Right ventricle myocardium inferior (tissue), 1 donor: ENCODE measurements at regions of chr7 and their contacts with region 1.

Region 1: GRCh38 chr7:131556052-131556908 is at the start of gene PODXL:
- DNase-seq: peak; percentile 91
- ATAC-seq: peak; percentile 89
- total RNA-seq, gene PODXL: 59.0 TPM

Region 2: DNA sequence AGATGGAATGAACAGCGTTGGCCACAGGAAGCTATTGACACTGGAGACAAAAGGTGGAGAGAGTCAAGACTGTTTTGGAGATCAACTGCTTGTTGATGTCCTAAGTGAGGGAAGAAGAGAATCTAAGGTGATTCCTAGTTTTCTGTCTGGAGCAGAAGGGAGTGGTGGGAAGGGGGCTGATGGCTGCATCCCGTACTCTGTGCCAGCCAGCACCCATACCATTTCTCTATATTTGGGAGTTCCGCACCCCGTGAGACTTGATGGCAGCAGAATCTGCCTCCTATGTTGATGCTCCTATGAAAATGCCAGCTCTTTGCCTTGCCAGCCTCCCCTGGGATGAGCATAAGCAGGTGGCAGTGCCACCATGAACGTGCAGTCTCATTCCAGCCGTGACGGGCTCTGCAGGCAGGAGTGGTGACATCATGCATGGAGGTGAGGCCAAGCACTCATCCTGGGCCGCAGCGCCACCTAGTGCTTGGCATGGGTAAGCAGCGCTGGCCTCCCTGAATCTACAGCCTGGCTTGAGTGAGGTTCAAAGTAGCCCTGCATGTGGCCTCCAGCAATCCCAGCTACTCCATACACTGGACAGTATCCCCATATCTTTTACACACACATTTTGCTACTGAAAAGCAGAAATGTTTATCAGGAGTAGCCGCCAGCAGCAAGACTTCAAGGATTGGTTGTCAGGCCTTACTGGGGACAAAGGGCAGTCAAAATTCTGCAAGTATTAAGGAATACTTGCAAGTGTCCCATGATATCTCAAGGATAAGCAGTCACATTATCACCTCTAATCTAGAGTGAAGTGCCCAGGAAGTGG is 42.8 kb before region 1 on chr7:
- intact Hi-C with region 1: loop called (anchors 2 kb)
- DNase-seq: peak; percentile 94
- ATAC-seq: peak; percentile 95

Region 3: DNA sequence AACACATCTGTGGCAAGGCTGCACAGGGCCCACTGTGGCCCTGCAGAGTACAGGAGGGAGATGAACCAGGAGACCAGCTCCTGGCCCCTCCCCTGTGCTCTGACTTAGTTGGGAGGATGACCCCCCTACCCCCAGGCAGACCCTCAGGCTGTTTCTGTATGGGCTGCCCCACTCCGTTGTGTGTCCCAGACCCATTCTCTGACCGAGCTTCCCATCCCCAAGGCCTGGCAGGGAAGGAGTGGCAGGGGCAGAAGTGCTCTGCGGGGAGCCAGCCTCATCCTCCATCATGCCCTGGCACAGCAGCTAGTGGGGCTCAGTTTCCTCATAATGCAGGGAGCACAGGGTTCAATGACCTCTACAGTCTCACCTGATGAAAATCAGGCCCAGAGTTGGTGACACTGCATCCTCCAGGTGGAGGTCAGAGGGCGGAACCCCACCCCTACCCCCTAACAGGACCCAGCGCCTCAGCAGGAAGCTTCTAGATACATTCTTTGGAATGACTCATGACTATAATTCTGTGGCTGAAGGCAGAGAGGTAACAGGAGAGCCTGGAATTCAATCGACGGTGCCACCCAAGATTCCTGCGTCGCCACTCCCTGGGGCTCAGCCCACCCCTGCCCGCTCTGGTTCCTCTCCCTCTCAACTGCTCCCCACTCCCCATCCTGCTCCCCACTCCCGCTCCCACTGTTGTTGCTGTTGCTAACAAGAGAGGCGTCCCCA is 18.0 kb before region 1 on chr7:
- intact Hi-C with region 1: no loop called
- DNase-seq: no peak
- ATAC-seq: peak; percentile 8

Region 4: DNA sequence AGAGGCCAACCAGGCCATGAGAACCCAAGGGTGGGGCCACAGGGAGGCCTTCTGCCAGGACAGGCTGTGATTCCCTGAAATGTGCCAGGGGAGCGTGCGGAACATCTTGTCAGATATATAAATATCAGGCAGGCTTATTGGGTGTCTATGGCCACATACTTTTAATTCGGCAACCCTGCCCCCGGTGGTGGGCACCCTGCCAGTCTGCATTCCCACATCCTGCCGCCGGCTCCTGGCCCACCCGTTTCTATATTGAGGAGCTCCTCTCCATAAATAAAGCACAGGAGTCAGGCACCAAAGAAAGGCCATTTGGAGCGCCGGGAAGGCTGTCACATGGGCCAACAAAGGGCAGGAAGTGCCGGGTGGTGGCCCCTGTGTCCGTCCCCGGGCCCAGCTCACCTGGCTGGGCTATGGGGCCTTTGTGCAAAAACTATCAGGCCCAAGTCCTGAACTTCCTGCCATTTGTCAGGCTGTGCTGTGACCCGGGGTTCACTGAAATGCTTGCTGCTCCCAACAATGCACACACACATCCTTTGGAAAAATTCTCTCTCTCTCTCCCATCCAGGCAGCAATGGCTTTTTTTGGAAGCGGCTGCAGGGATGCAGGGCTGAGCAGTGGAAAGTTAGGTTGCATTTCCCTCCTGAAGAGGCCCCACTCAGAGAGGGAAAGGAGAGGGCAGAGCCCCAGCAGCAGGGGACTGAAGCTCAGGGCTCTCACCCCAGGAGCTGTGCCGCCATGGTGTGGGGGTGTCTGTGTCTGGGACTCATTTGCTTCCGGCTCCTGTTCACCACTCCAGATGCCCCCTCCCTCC is 25.2 kb after region 1 on chr7:
- intact Hi-C with region 1: loop called (anchors 1 kb)
- DNase-seq: peak; percentile 86
- ATAC-seq: peak; percentile 90

Region 5: DNA sequence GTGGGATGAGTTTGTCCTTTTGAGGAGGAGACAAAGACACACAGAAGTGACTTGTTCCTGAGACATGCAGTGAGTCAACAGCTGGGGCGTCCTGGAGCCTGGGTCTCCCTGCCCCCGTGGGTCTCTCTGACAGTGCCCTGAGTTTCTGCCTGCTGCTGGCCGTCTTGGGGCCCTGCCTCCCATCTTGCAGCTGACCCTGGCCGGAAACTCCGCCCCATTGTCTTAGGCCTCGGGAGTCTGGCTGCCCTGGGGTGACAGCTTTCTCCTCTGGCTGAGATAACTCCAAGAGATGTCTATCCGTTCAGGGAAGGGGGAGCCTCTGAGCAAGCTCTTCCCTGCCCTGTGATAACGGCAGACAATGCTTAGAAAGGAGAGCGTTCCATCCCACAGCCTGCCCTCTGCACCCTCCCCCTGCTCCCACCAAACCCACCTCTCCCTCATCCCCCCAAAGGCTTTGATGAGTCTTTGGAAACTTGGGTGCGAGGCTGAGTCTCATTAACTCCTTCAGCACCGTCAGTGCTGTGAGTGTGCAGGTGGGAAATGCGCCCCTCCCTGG is 69.6 kb after region 1 on chr7:
- intact Hi-C with region 1: loop called (anchors 5 kb)
- DNase-seq: no peak
- ATAC-seq: no peak

Region 6: GRCh38 chr7:131654668-131655326 is 98.5 kb after region 1 on chr7:
- intact Hi-C with region 1: loop called (anchors 1 kb)
- DNase-seq: peak; percentile 92
- ATAC-seq: peak; percentile 83